Activated CD4-positive, alpha-beta memory T cell treated with anti-CD3 and anti-CD28 coated beads, Interleukin-2, amount 10 ng/mL, durations not matched to agents 7 days and 5 days (primary cell): ENCODE measurements at regions of chr18 and their contacts with region 1.

Region 1: DNA sequence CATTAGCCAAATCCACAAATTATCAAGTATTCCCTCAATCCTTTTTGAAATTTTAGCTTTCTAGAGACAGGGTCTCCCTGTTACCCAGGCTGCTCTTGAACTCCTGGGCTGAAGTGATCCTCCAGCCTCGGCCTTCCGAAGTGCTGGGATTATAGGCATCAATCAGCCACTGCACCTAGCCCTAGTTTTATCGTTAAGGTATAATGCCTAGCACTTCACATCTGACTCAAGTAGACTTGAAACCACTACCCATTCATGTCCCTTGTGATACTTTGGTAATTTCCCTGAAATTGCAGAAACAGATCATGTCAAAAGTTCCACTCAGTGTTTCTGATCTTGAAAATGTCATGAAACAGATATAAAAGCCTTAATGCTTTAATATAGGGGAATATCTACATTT is 26.3 kb downstream of the MEX3C start:
- DNase-seq: no peak
- H3K4me3 Mint-ChIP-seq: no peak overlapping the region
- H3K27ac Mint-ChIP-seq: peak overlapping the region; percentile 82
- H3K4me1 Mint-ChIP-seq: peaks cover 60% of the 10 kb centered on the region
- H3K27me3 Mint-ChIP-seq: no peaks in the 10 kb centered on the region

Region 2: GRCh38 chr18:51160646-51161045 is 10.6 kb before region 1 on chr18:
- CTCF ChIA-PET with region 1: no interaction called
- POLR2A ChIA-PET with region 1: no interaction called
- DNase-seq: no peak
- H3K4me3 Mint-ChIP-seq: no peak overlapping the region
- H3K27ac Mint-ChIP-seq: no peak overlapping the region
- H3K4me1 Mint-ChIP-seq: peaks cover 35% of the 10 kb centered on the region
- H3K27me3 Mint-ChIP-seq: no peaks in the 10 kb centered on the region

Region 3: DNA sequence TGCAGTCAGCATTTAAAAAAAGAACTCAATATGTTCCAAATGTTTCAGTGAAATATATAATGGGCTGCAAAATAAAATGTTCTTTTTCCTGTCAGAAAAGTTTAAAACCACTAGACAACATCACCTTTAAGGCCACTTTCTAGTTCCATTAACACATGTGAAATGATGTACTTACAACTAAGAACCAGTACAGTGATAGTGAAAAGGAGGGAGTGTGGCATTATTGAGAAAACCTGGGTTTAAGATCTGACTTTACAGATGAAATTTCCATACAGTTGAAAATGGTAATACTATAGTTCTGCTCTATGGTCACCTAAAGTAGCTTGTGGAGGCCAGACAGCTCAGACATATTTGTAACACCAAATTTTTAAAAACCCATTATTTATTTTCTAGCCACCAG is 11.6 kb after region 1 on chr18:
- CTCF ChIA-PET with region 1: no interaction called
- POLR2A ChIA-PET with region 1: interaction called, 14 read pairs
- DNase-seq: no peak
- H3K4me3 Mint-ChIP-seq: no peak overlapping the region
- H3K27ac Mint-ChIP-seq: no peak overlapping the region
- H3K4me1 Mint-ChIP-seq: peaks cover 46% of the 10 kb centered on the region
- H3K27me3 Mint-ChIP-seq: no peaks in the 10 kb centered on the region

Region 4: DNA sequence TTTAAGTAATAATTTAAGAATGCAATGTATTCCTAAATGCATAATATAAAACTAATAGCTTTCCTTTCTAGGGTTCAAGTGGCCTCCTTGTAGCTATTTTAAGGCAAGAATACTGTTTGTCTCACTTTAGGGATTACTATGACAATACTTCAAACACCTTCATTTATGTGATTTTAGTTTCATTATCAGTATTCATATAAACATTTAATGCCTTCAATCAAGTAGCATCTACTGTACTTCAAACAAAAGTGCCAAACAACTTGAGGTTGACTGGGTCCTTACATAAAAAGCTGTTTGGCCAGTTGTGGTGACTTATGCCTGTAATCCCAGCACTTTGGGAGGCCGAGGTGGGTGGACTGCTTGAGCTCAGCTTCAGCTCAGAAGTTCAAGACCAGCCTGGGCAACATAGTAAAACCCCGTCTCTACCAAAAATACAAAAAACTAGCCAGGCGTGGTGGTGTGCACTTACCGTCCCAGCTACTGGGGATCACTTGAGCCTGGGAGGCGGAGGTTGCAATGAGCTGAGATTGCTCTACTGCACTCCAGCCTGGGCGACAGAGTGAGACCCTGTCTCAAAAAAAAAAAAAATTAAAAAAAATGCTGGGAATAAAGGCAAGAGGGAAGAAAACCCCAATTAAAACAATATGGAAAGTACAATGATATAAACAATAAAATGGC is 16.9 kb after region 1 on chr18:
- CTCF ChIA-PET with region 1: interaction called, 4 read pairs
- POLR2A ChIA-PET with region 1: interaction called, 70 read pairs
- DNase-seq: no peak
- H3K4me3 Mint-ChIP-seq: peak overlapping the region; percentile 33
- H3K27ac Mint-ChIP-seq: no peak overlapping the region
- H3K4me1 Mint-ChIP-seq: peaks cover 70% of the 10 kb centered on the region
- H3K27me3 Mint-ChIP-seq: no peaks in the 10 kb centered on the region